ENCODE measurements at regions of chrX and their contacts with region 1.

Region 1: GRCh38 chrX:70196961-70197805 is 19.9 kb downstream of the DGAT2L6 start:
- DNase-seq: peak; percentile 14
- ATAC-seq: peak; percentile 79
- H3K4me3 Mint-ChIP-seq: peak overlapping the region; percentile 6
- H3K27ac Mint-ChIP-seq: no peak overlapping the region
- H3K4me1 Mint-ChIP-seq: peaks cover 4% of the 10 kb centered on the region
- H3K27me3 Mint-ChIP-seq: peaks cover 2% of the 10 kb centered on the region
- CTCF ChIP-seq: no peak

Region 2: DNA sequence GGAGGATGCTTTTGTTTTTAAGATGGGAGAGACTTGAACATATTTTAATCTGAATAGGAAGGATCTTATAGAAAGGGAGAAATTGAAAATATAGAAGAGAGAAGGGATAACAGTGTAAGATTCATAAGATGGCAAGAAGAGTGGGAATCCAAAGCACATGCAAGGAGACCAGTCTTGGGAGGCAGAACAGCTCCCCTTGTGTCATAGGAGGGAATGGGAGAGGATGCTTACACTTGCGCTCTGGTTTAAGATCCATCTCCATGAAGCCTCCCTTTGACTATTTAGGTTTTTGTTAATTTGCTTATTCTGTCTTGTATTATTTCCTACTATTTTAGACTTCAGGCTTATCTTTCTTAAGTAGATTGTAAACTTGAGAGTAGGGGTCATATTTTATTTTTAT is 135.4 kb after region 1 on chrX:
- CTCF ChIA-PET with region 1: no interaction called
- POLR2A ChIA-PET with region 1: no interaction called
- intact Hi-C with region 1: no loop called
- DNase-seq: no peak
- ATAC-seq: no peak
- H3K4me3 Mint-ChIP-seq: no peak overlapping the region
- H3K27ac Mint-ChIP-seq: no peak overlapping the region
- H3K4me1 Mint-ChIP-seq: peaks cover 6% of the 10 kb centered on the region
- H3K27me3 Mint-ChIP-seq: no peaks in the 10 kb centered on the region
- CTCF ChIP-seq: no peak

Region 3: DNA sequence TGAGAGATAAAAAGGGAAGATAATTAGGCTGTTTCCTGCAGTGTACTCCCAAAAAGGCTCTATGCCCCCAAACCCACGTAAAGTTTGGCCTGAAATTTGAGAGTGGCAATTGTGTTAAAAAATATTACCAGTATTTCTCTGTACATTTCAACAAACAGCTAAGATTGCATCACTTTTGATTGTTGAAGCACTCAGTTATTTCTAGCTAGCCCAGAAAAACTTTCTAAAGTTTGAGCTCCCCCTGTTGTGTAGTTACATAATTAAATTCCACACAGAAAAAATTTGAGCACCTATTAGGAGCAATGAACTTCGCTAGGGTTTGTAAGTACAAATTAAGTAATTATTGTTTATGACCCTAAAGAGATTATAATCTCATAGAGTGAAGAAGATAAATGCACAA is 356.9 kb after region 1 on chrX:
- CTCF ChIA-PET with region 1: no interaction called
- POLR2A ChIA-PET with region 1: no interaction called
- intact Hi-C with region 1: loop called (anchors 10 kb)
- DNase-seq: no peak
- ATAC-seq: no peak
- H3K4me3 Mint-ChIP-seq: no peak overlapping the region
- H3K27ac Mint-ChIP-seq: no peak overlapping the region
- H3K4me1 Mint-ChIP-seq: no peaks in the 10 kb centered on the region
- H3K27me3 Mint-ChIP-seq: peaks cover 2% of the 10 kb centered on the region
- CTCF ChIP-seq: no peak

Region 4: DNA sequence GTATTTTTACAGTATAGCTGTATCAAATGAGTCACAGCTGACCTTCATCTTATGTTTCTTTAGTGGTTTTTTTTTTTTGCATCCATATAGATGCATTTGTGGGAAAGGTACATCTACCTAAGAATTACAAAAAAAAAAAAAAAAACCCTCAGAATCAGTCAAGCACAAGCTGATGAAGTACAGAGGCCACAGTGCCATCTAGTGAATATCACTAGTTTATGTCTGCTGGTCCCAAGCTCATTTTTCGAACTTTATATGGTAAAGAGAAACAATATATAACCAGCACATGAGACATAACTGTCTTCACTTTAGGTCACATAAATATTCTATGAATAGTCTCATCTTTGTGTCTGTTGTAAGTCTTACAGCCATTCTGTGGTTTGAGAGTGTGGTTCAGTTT is 467.5 kb after region 1 on chrX:
- CTCF ChIA-PET with region 1: no interaction called
- POLR2A ChIA-PET with region 1: no interaction called
- intact Hi-C with region 1: loop called (anchors 1 kb)
- DNase-seq: no peak
- ATAC-seq: no peak
- H3K4me3 Mint-ChIP-seq: no peak overlapping the region
- H3K27ac Mint-ChIP-seq: no peak overlapping the region
- H3K4me1 Mint-ChIP-seq: no peaks in the 10 kb centered on the region
- H3K27me3 Mint-ChIP-seq: no peaks in the 10 kb centered on the region
- CTCF ChIP-seq: no peak